Activated CD4-positive, alpha-beta memory T cell treated with anti-CD3 and anti-CD28 coated beads, Interleukin-2, amount 10 ng/mL, durations not matched to agents 7 days and 5 days (primary cell): ENCODE measurements at regions of chr2 and their contacts with region 1.

Region 1: DNA sequence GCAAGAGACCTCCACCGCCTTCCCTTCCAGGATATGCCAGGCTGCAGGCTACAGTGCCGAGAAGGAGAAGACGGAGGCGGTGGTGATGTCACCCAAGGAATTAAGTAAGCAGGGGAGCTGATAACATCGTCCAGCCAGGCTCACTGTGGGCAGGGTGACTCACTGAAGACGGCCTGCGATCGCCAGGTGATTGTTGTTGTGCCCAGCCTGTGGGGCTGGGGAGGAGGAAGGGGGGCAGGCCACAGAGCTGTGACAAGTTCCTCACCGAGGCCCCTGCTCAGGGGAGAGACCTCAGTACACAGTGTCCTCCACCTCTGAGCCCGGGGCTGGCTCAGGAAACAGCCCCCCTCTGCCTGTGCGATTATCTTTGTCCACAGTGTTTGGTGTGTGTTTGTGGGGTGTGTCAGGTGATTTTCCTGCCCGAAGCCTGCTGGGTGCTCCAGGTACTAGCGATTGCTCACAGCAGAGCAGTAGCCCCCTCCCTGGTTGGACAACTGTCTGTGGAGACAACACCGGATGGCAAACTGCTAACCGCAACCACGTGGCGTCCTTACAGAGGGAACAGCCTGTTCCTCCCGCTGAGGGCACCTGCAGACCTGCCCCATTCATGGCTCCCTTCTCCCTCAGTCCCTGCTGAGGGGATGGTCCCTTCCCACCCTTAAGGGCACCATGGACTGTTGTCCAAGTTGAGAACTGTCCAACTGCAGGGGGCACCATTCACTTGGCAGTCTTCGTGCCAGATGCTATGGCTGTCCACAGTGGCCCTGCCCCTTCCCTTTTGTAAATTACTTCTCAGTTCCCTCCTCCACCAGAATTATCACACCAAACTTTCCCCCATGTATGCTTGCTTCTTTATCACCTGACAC is 95.1 kb downstream of the ZFP36L2 start:
- DNase-seq: peak; percentile 92
- H3K4me3 Mint-ChIP-seq: peak overlapping the region; percentile 48
- H3K27ac Mint-ChIP-seq: peak overlapping the region; percentile 99
- H3K4me1 Mint-ChIP-seq: peaks cover 92% of the 10 kb centered on the region
- H3K27me3 Mint-ChIP-seq: peaks cover under 1% of the 10 kb centered on the region

Region 2: GRCh38 chr2:42810121-42810970 is 320.9 kb before region 1 on chr2:
- CTCF ChIA-PET with region 1: no interaction called
- POLR2A ChIA-PET with region 1: interaction called, 10 read pairs
- DNase-seq: peak; percentile 96
- H3K4me3 Mint-ChIP-seq: peak overlapping the region; percentile 93
- H3K27ac Mint-ChIP-seq: peak overlapping the region; percentile 100
- H3K4me1 Mint-ChIP-seq: peaks cover 18% of the 10 kb centered on the region
- H3K27me3 Mint-ChIP-seq: peaks cover 7% of the 10 kb centered on the region

Region 3: GRCh38 chr2:43158259-43158880 is 27.1 kb after region 1 on chr2:
- CTCF ChIA-PET with region 1: interaction called, 5 read pairs
- POLR2A ChIA-PET with region 1: interaction called, 16 read pairs
- DNase-seq: peak; percentile 77
- H3K4me3 Mint-ChIP-seq: peak overlapping the region; percentile 71
- H3K27ac Mint-ChIP-seq: peak overlapping the region; percentile 98
- H3K4me1 Mint-ChIP-seq: peaks cover 61% of the 10 kb centered on the region
- H3K27me3 Mint-ChIP-seq: no peaks in the 10 kb centered on the region

Region 4: DNA sequence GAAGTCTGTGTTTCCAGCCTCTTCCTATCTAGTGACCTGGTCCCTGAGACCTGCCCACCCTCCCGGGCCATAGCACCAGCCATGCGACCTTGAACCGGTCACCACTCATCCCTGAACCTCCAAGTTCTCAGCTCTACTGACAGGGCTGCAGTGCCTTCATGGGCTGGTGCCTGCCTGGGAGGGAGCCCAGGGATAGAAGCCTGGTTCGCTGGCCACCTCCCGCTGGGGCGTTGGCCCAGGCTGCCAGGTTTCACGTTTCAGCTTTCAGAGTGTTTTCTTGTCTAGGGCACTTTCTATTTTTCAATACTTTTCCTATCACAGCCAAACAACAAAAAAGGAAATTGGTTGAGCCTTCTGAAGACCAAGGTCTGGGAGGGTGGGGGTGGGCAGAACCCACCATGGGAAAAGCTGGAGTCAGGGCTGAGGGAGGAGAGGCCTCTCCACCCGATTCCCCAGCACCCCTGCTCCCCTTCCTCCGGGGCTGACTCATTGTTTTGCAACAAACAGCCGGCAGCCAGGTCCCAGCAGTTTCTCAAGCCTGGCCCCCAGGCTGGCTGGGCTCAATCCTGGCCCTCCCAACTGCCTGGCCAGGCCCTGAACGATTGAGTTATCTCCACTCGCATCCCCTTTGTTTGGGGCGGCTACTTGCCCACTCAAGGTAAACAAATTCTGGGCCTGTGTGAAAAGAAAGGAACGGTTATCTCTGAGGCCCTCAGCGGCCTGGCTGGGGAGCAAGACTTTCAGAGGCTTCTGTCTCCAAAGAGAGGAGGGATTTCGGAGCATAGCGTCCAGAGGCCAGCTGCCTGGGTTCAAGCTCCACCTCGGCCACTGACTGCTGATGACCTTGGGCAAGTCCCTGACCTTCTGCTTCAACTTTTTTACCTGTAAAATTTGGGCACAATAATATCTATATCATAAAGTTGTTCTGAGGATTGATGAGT is 47.6 kb after region 1 on chr2:
- CTCF ChIA-PET with region 1: interaction called, 11 read pairs
- POLR2A ChIA-PET with region 1: interaction called, 154 read pairs
- DNase-seq: peak; percentile 43
- H3K4me3 Mint-ChIP-seq: no peak overlapping the region
- H3K27ac Mint-ChIP-seq: peak overlapping the region; percentile 87
- H3K4me1 Mint-ChIP-seq: peaks cover 69% of the 10 kb centered on the region
- H3K27me3 Mint-ChIP-seq: no peaks in the 10 kb centered on the region

Region 5: DNA sequence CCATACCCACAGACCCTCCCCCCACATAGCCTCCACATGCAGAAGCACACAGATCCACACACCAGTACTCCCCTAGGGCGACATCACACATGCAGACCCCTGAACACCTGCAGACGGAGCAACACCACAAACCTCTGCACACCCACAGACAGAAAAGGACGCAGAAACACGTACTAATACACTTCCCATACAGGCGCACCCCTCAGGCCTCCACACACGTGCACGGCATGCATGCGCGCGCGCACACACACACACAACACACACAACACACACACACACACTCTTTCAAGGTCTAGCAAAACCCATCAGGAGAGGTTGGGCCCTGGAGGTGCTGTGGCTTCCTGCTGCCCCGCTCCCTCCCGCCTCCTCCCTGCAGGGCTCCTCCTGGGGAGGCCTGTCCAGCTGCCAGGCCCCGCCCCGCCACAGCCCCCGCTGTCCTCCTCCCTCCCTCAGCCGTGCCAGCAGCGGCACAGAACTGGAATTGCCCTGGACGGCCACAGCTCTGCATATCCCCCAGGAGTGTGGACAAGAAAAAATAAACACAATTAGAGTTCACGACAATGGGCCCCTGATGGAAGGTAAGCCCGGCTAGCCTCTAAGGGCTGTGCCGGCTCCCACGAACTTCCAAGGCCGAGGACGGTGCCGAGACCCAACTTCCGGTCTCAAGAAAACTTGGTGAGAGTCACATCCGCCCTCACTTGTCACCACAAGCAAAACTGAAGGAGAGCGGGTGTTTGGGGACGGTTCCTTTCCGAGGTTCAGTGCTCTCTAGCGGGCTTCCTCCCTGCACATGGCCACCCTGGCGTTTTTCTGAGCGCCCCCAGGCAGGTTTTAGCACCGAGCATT is 88.3 kb after region 1 on chr2:
- CTCF ChIA-PET with region 1: interaction called, 172 read pairs
- POLR2A ChIA-PET with region 1: interaction called, 1,053 read pairs
- DNase-seq: peak; percentile 88
- H3K4me3 Mint-ChIP-seq: peak overlapping the region; percentile 95
- H3K27ac Mint-ChIP-seq: peak overlapping the region; percentile 98
- H3K4me1 Mint-ChIP-seq: peaks cover 48% of the 10 kb centered on the region
- H3K27me3 Mint-ChIP-seq: no peaks in the 10 kb centered on the region

Region 6: GRCh38 chr2:43542285-43542937 is 411.2 kb after region 1 on chr2:
- CTCF ChIA-PET with region 1: interaction called, 29 read pairs
- POLR2A ChIA-PET with region 1: interaction called, 5 read pairs
- DNase-seq: no peak
- H3K4me3 Mint-ChIP-seq: no peak overlapping the region
- H3K27ac Mint-ChIP-seq: no peak overlapping the region
- H3K4me1 Mint-ChIP-seq: peaks cover 20% of the 10 kb centered on the region
- H3K27me3 Mint-ChIP-seq: no peaks in the 10 kb centered on the region